Activated T-helper 1 cell treated with anti-CD3 and anti-CD28 coated beads, Interleukin-12 subunit alpha, Interleukin-12 subunit beta, Interleukin-2, Interleukin-4 antibody, amounts not matched to agents 30 ng/mL and 10 ng/mL and 1 ng/mL, durations not matched to agents 14 hours and 24 hours and 36 hours (primary cell): ENCODE measurements at regions of chrX and their contacts with region 1.

Region 1: GRCh38 chrX:132463411-132463810 is 25.4 kb downstream of the MBNL3 start:
- DNase-seq: no peak
- H3K4me3 Mint-ChIP-seq: no peak overlapping the region
- H3K27ac Mint-ChIP-seq: no peak overlapping the region
- H3K4me1 Mint-ChIP-seq: no peaks in the 10 kb centered on the region
- H3K27me3 Mint-ChIP-seq: no peaks in the 10 kb centered on the region

Region 2: GRCh38 chrX:132226169-132226568 is 237.2 kb before region 1 on chrX:
- intact Hi-C with region 1: loop called (anchors 5 kb)
- DNase-seq: no peak
- H3K4me3 Mint-ChIP-seq: no peak overlapping the region
- H3K27ac Mint-ChIP-seq: no peak overlapping the region
- H3K4me1 Mint-ChIP-seq: no peaks in the 10 kb centered on the region
- H3K27me3 Mint-ChIP-seq: peaks cover 3% of the 10 kb centered on the region